HCT116 (cell line): ENCODE measurements at regions of chr15 and their contacts with region 1.

Region 1: GRCh38 chr15:49255966-49256759 is 86.1 kb downstream of the GALK2 start:
- DNase-seq: no peak
- ATAC-seq: no peak
- H3K4me3 ChIP-seq: no peak overlapping the region
- H3K27ac ChIP-seq: no peak overlapping the region
- H3K4me1 ChIP-seq: no peaks in the 10 kb centered on the region
- H3K27me3 ChIP-seq: no peaks in the 10 kb centered on the region
- CTCF ChIP-seq: no peak
- POLR2A ChIP-seq: no peak
- RAD21 ChIP-seq: no peak

Region 2: GRCh38 chr15:50302581-50302980 is 1046.4 kb after region 1 on chr15:
- CTCF ChIA-PET with region 1: no interaction called
- POLR2A ChIA-PET with region 1: no interaction called
- RAD21 ChIA-PET with region 1: no interaction called
- intact Hi-C with region 1: loop called (anchors 10 kb)
- DNase-seq: no peak
- ATAC-seq: no peak
- H3K4me3 ChIP-seq: no peak overlapping the region
- H3K27ac ChIP-seq: no peak overlapping the region
- H3K4me1 ChIP-seq: no peaks in the 10 kb centered on the region
- H3K27me3 ChIP-seq: no peaks in the 10 kb centered on the region
- CTCF ChIP-seq: no peak
- POLR2A ChIP-seq: no peak
- RAD21 ChIP-seq: no peak